B cell (primary cell): ENCODE measurements at regions of chr20 and their contacts with region 1.

Region 1: DNA sequence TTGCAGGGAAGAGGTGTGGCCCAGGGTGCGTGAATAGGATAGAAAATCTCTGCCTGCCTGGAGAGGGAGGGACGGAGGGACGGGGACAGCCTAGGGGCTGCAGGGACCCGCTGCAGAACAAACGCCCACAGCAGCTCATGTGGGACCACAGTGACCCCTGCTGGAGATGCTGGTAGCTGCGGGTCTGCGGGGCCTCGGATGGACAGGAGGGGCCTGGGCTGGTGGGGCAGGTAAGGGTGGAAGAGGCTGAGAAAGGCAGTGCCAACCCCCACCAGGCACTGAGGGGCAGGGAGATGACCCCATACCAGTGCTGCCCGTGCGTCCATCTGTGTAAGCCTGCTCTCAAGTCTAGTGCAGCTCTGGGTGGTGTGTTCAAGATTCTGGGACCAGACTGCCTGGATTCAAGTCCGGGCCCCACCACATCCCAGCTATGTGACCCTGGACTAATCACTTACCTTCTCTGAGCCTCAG is 39.4 kb downstream of the KIAA1755 start:
- DNase-seq: peak; percentile 77
- ATAC-seq: peak; percentile 84
- H3K4me3 ChIP-seq: no peak overlapping the region
- H3K4me3 Mint-ChIP-seq: peak overlapping the region; percentile 55
- H3K27ac ChIP-seq: no peak overlapping the region
- H3K27ac Mint-ChIP-seq: peak overlapping the region; percentile 37
- H3K4me1 ChIP-seq: peaks cover 0 to 4% of the 10 kb centered on the region in 2 donors
- H3K4me1 Mint-ChIP-seq: peaks cover 5% of the 10 kb centered on the region
- H3K27me3 ChIP-seq: no peaks in the 10 kb centered on the region
- H3K27me3 Mint-ChIP-seq: peaks cover 5% of the 10 kb centered on the region
- CTCF ChIP-seq: peak; percentile 89

Region 2: GRCh38 chr20:37651932-37652331 is 569.2 kb before region 1 on chr20:
- CTCF ChIA-PET with region 1: no interaction called
- POLR2A ChIA-PET with region 1: no interaction called
- intact Hi-C with region 1: loop called (anchors 10 kb)
- DNase-seq: peak; percentile 57
- ATAC-seq: peak; percentile 66
- H3K4me3 ChIP-seq: no peak overlapping the region
- H3K4me3 Mint-ChIP-seq: no peak overlapping the region
- H3K27ac ChIP-seq: no peak overlapping the region
- H3K27ac Mint-ChIP-seq: no peak overlapping the region
- H3K4me1 ChIP-seq: no peaks in the 10 kb centered on the region
- H3K4me1 Mint-ChIP-seq: no peaks in the 10 kb centered on the region
- H3K27me3 ChIP-seq: peaks cover 0 to 8% (median 4%) of the 10 kb centered on the region in 4 experiments
- H3K27me3 Mint-ChIP-seq: peaks cover 28% of the 10 kb centered on the region
- CTCF ChIP-seq: peak; percentile 51

Region 3: GRCh38 chr20:37990571-37991151 is 230.5 kb before region 1 on chr20:
- CTCF ChIA-PET with region 1: interaction called, 14 read pairs
- POLR2A ChIA-PET with region 1: no interaction called
- intact Hi-C with region 1: no loop called
- DNase-seq: peak; percentile 75
- ATAC-seq: peak; percentile 88
- H3K4me3 ChIP-seq: no peak overlapping the region
- H3K4me3 Mint-ChIP-seq: peak overlapping the region; percentile 6
- H3K27ac ChIP-seq: no peak overlapping the region
- H3K27ac Mint-ChIP-seq: peak overlapping the region; percentile 51
- H3K4me1 ChIP-seq: peaks cover 13 to 18% of the 10 kb centered on the region in 2 donors
- H3K4me1 Mint-ChIP-seq: peaks cover 18% of the 10 kb centered on the region
- H3K27me3 ChIP-seq: no peaks in the 10 kb centered on the region
- H3K27me3 Mint-ChIP-seq: no peaks in the 10 kb centered on the region
- CTCF ChIP-seq: no peak

Region 4: DNA sequence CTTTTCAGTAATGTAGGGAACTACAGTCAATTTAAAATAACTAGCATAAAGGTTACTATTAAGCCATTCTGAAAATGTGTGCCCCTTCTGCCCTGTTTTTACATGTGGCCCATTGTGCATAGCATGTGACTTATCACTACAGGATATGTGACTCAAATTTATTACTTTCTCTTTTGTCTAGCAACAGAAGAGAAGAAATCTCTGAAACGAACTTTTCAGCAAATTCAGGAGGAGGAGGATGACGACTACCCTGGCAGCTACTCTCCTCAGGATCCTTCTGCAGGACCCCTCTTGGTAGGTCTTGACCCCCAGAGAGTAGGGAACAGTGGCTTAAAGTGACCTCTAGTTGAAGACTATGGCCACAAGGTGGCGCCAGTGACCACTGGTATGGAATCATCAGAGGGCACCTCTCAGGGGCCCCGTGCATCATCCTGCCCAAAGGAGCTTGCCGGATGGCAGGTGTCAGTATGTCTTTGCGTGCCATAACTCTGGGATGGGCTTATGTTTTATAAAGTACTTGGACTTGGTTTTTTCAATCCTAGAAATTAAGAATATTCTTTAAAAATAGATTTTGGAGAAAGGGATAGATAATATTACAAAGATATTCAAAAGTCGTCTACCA is 163.7 kb before region 1 on chr20:
- CTCF ChIA-PET with region 1: interaction called, 494 read pairs
- POLR2A ChIA-PET with region 1: interaction called, 3 read pairs
- intact Hi-C with region 1: loop called (anchors 1 kb)
- DNase-seq: peak; percentile 86
- ATAC-seq: peak; percentile 96
- H3K4me3 ChIP-seq: no peak overlapping the region
- H3K4me3 Mint-ChIP-seq: no peak overlapping the region
- H3K27ac ChIP-seq: no peak overlapping the region
- H3K27ac Mint-ChIP-seq: peak overlapping the region; percentile 59
- H3K4me1 ChIP-seq: peaks cover 0 to 3% of the 10 kb centered on the region in 2 donors
- H3K4me1 Mint-ChIP-seq: peaks cover 13% of the 10 kb centered on the region
- H3K27me3 ChIP-seq: no peaks in the 10 kb centered on the region
- H3K27me3 Mint-ChIP-seq: no peaks in the 10 kb centered on the region
- CTCF ChIP-seq: peak; percentile 98

Region 5: GRCh38 chr20:38113401-38114325 is 107.5 kb before region 1 on chr20:
- CTCF ChIA-PET with region 1: interaction called, 10 read pairs
- POLR2A ChIA-PET with region 1: no interaction called
- intact Hi-C with region 1: no loop called
- DNase-seq: no peak
- ATAC-seq: no peak
- H3K4me3 ChIP-seq: no peak overlapping the region
- H3K4me3 Mint-ChIP-seq: no peak overlapping the region
- H3K27ac ChIP-seq: no peak overlapping the region
- H3K27ac Mint-ChIP-seq: no peak overlapping the region
- H3K4me1 ChIP-seq: peaks cover 0 to 3% of the 10 kb centered on the region in 2 donors
- H3K4me1 Mint-ChIP-seq: peaks cover 3% of the 10 kb centered on the region
- H3K27me3 ChIP-seq: no peaks in the 10 kb centered on the region
- H3K27me3 Mint-ChIP-seq: no peaks in the 10 kb centered on the region
- CTCF ChIP-seq: no peak

Region 6: DNA sequence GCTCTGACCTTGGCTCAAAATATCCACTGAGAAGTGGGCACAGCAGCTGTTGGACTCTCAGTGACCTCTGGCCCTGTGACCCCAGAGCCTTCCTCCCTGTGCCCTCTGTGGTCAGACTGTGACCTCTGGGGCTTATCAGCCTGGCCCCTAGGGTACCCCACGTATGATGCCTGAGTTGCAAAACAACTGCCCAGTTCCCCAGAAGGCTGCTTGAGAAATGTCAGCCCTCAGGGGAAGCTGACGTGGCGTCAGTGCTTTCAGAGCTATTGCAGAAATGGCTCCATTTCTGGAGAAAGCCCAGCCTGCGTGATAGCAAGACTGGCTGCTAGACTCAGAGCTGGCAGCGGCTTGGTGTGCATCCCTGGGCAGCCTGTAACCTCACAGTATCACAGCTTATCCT is 24.6 kb before region 1 on chr20:
- CTCF ChIA-PET with region 1: interaction called, 61 read pairs
- POLR2A ChIA-PET with region 1: no interaction called
- intact Hi-C with region 1: no loop called
- DNase-seq: no peak
- ATAC-seq: peak; percentile 85
- H3K4me3 ChIP-seq: no peak overlapping the region
- H3K4me3 Mint-ChIP-seq: peak overlapping the region; percentile 9
- H3K27ac ChIP-seq: no peak overlapping the region
- H3K27ac Mint-ChIP-seq: peak overlapping the region; percentile 0
- H3K4me1 ChIP-seq: peaks cover 0 to 3% of the 10 kb centered on the region in 2 donors
- H3K4me1 Mint-ChIP-seq: peaks cover 26% of the 10 kb centered on the region
- H3K27me3 ChIP-seq: peaks cover 0 to 10% (median 3%) of the 10 kb centered on the region in 4 experiments
- H3K27me3 Mint-ChIP-seq: peaks cover 12% of the 10 kb centered on the region
- CTCF ChIP-seq: no peak

Region 7: GRCh38 chr20:38242848-38243449 is 21.8 kb after region 1 on chr20:
- CTCF ChIA-PET with region 1: interaction called, 15 read pairs
- POLR2A ChIA-PET with region 1: no interaction called
- intact Hi-C with region 1: no loop called
- DNase-seq: no peak
- ATAC-seq: no peak
- H3K4me3 ChIP-seq: no peak overlapping the region
- H3K4me3 Mint-ChIP-seq: no peak overlapping the region
- H3K27ac ChIP-seq: no peak overlapping the region
- H3K27ac Mint-ChIP-seq: no peak overlapping the region
- H3K4me1 ChIP-seq: no peaks in the 10 kb centered on the region
- H3K4me1 Mint-ChIP-seq: no peaks in the 10 kb centered on the region
- H3K27me3 ChIP-seq: peaks cover 0 to 13% (median 4%) of the 10 kb centered on the region in 4 experiments
- H3K27me3 Mint-ChIP-seq: peaks cover 35% of the 10 kb centered on the region
- CTCF ChIP-seq: peak; percentile 46

Region 8: DNA sequence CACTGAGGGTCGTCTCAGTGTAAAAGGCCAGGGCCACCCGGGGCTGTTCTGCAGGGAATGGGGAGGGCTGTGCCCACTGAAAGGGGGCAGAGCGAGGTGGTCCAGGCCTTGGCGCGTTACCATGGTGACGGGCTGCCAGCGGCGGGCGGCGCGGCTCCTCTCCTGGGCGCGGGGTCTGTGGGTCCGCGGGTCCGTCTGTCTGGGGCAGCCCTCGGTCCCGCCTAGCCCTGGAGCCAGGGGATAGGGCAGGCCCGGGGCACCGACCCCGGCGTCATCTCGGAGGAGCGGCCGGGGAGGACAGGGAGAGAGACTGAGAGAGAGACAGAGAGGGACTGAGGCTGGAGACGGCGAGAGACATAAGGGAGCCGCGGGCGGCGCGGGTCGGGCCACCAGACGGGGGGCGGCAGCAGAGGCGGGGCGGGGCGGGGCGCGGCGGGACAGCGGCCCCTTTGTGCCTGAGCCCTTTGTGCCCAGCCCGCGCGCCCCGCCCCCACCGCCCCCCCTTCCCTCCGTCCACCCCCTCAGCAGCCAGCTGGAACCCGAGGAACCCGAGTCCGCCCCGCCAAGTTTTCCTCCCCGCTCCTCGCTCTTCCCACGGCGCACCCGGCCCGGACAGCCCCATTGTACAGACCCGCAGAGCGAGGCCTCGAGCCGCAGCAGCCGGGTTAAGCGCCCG is 39.4 kb after region 1 on chr20 and contains the start of gene KIAA1755:
- CTCF ChIA-PET with region 1: no interaction called
- POLR2A ChIA-PET with region 1: no interaction called
- intact Hi-C with region 1: no loop called
- DNase-seq: no peak
- ATAC-seq: no peak
- H3K4me3 ChIP-seq: no peak within 1 kb of the TSS
- H3K4me3 Mint-ChIP-seq: no peak within 1 kb of the TSS
- H3K27ac ChIP-seq: no peak within 1 kb of the TSS
- H3K27ac Mint-ChIP-seq: no peak within 1 kb of the TSS
- H3K4me1 ChIP-seq: no peaks in the 10 kb centered on the region
- H3K4me1 Mint-ChIP-seq: peaks cover 5% of the 10 kb centered on the region
- H3K27me3 ChIP-seq: peaks cover 0 to 34% (median 19%) of the 10 kb centered on the region in 4 experiments
- H3K27me3 Mint-ChIP-seq: peaks cover 65% of the 10 kb centered on the region
- CTCF ChIP-seq: no peak
- total RNA-seq, gene KIAA1755: not detected in 2 replicates